PC-9 (cell line): ENCODE measurements at regions of chr3 and their contacts with region 1.

Region 1: DNA sequence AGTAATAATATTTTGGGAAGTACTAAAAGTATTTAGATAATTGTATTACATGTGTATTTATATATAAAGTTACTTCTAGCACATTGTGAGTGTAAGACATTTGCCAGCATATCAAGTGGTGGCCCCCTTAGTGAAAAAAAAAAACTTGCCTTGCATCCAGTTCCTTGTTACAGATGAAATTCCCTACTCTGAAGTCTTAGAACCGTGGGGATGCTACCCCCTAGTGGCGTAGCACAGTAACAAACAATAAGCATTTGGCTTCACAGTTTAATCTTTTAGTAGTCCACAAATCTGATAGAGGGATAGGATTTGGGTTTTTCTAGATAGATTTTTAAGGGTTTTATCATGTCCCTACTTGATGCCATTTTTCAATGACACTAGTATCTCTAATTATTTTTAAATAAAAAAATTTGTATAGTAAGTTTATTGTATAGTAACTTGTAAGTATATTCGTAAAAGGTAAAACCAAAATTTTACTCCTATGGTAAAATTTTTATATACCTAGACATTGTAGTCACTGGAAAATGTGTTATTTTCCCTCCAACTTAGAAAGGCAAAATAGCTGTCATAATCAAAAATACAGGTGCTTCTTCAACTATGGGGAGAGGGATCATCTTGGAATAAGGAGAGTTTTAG is 14.3 kb downstream of the SMC4 start:
- DNase-seq: peak; percentile 61 to 67
- H3K4me3 ChIP-seq: no peak overlapping the region
- H3K27ac ChIP-seq: no peak overlapping the region
- H3K4me1 ChIP-seq: no peaks in the 10 kb centered on the region
- H3K27me3 ChIP-seq: no peaks in the 10 kb centered on the region
- CTCF ChIP-seq: peak; percentile 94

Region 2: DNA sequence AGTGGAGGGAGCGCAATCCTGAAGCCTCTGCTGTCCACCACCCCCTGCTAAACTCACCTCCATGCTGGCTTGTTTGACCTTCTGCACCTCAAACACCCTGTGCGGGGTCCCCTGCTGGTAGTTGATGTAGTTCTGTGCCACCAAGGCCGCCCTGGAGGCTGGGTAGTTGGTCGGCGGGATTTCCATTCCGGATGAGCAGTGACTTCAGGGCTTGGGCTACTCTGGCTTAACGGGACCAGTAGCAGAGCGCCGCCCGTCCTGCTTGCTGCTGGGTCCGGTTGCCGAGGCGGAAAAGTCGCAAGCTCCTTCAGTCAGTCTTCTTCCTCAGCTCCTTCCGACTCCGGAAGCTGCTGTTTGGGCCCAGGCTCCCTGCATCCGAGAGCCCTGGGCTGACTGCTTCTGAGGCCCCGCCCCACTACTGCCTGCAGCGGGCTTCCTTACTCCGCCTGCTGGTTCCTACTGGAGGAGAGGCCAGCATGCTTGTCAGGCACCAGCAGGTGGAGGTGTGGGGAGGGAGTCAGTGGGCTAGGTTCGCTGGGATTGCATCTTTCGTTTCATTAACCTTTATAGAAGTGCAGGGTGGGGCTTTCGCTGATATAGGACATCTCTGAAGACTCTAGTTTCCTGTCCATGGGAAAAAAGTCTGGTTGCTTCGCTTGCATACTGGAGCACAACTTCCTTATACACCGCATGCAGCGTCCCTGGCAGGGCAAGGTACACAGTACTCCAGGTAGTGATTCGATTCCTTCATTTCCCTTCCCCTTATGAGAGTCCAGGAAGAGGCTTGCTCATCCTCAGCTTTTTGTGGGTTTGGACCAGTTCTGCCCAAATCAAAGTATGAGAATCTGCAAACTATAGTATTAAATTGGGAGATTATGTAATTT is 1741.2 kb before region 1 on chr3 and contains the start of gene LXN:
- CTCF ChIA-PET with region 1: no interaction called
- POLR2A ChIA-PET with region 1: interaction called, 10 read pairs
- intact Hi-C with region 1: no loop called
- DNase-seq: no peak
- H3K4me3 ChIP-seq: no peak within 1 kb of the TSS
- H3K27ac ChIP-seq: no peak within 1 kb of the TSS
- H3K4me1 ChIP-seq: no peaks in the 10 kb centered on the region
- H3K27me3 ChIP-seq: no peaks in the 10 kb centered on the region
- CTCF ChIP-seq: no peak
- total RNA-seq, gene LXN: not detected in 2 replicates

Region 3: DNA sequence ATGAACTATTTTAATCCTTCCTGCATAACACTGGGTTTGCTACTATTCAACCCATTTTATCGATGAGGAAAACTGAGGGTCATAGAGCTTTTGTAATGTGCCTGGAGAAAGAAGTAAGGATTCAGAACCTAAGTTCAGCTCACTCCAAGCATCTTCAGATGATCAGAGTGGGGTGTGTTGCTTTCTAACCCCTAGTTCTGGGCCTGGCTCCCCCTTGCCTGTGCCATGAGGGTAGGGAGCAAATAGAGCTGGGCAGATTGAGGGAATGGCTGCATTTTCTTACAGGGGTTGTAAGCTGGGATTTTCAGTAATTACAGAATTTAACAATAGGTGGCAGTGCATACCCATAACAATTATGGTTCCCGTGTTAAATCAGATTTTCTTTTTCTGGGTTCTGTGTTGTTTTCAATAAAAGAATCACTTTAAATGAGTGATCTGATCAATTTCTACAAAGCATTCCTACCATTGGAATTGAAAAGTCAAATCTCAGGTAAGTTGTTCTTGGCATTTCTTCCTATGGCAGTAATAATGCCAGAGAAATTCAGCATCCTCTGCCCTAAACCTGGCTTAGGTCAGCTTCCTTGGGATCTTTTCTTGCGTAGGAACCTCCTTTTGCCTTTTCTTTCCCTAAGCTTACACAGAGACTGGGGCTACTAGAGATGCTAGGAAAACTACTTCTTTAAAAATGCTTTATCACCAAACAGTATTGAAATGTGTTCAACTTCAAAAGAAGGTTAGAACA is 528.9 kb before region 1 on chr3:
- CTCF ChIA-PET with region 1: no interaction called
- POLR2A ChIA-PET with region 1: no interaction called
- intact Hi-C with region 1: loop called (anchors 5 kb)
- DNase-seq: peak; percentile 15 to 45
- H3K4me3 ChIP-seq: no peak overlapping the region
- H3K27ac ChIP-seq: no peak overlapping the region
- H3K4me1 ChIP-seq: no peaks in the 10 kb centered on the region
- H3K27me3 ChIP-seq: no peaks in the 10 kb centered on the region
- CTCF ChIP-seq: peak; percentile 85

Region 4: GRCh38 chr3:160027541-160028195 is 386.1 kb before region 1 on chr3:
- CTCF ChIA-PET with region 1: no interaction called
- POLR2A ChIA-PET with region 1: interaction called, 34 read pairs
- intact Hi-C with region 1: loop called (anchors 1 kb)
- DNase-seq: peak; percentile 33 to 56
- H3K4me3 ChIP-seq: no peak overlapping the region
- H3K27ac ChIP-seq: peak overlapping the region; percentile 63
- H3K4me1 ChIP-seq: peaks cover 12% of the 10 kb centered on the region
- H3K27me3 ChIP-seq: no peaks in the 10 kb centered on the region
- CTCF ChIP-seq: no peak

Region 5: DNA sequence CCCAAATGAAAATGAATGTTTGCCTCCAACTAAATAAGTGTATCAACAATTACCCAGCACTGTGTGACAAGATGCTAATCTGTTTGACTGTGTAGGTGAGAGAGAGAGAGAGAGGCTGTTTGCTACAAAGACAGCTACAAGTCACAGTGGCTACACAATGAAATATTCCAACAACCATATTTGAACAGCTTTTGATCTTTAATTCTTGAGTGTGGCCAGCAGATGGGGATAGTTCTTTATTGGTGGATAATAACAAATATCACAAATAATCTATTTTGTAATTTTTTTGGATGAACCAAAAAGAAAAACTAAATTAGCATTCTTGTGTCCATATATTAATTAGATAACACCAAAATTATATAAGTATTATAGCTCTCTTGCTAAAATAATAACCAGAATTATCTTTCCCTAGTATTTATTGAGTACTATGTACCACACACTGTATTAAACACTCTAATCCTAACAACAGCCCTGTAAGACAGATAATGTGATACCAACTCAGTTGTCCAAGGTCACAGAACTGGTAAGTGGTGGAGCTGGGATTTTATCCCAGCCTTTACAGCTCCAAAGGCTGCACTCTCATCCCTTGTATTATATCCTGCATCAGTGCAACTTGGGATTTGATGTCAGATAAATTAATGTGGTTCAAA is 250.4 kb before region 1 on chr3:
- CTCF ChIA-PET with region 1: no interaction called
- POLR2A ChIA-PET with region 1: no interaction called
- intact Hi-C with region 1: loop called (anchors 2 kb)
- DNase-seq: no peak
- H3K4me3 ChIP-seq: no peak overlapping the region
- H3K27ac ChIP-seq: no peak overlapping the region
- H3K4me1 ChIP-seq: no peaks in the 10 kb centered on the region
- H3K27me3 ChIP-seq: no peaks in the 10 kb centered on the region
- CTCF ChIP-seq: peak; percentile 72

Region 6: GRCh38 chr3:160427832-160428424 is 14.2 kb after region 1 on chr3:
- CTCF ChIA-PET with region 1: interaction called, 9 read pairs
- POLR2A ChIA-PET with region 1: interaction called, 3 read pairs
- intact Hi-C with region 1: loop called (anchors 2 kb)
- DNase-seq: no peak
- H3K4me3 ChIP-seq: no peak overlapping the region
- H3K27ac ChIP-seq: no peak overlapping the region
- H3K4me1 ChIP-seq: no peaks in the 10 kb centered on the region
- H3K27me3 ChIP-seq: no peaks in the 10 kb centered on the region
- CTCF ChIP-seq: no peak

Region 7: DNA sequence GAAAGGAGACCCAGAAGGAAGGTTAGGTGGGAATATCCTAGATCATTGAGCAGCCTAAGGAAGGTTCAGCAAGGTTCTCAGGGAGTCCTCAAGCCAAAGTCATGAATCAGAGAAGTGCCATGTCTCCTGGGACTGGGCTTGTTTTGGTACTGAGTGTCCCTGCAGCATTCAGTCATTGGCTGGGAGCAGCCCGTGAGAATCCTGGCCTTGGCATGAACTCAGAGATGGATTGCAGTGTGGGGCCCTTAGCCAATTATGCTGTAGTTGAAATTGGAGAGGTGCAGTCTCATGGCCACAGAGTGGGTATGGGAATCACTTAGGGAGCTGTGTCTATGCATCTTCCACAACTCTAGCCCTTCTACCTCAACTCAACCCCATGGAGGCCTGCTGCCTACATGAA is 325.3 kb after region 1 on chr3:
- CTCF ChIA-PET with region 1: no interaction called
- POLR2A ChIA-PET with region 1: no interaction called
- intact Hi-C with region 1: no loop called
- DNase-seq: no peak
- H3K4me3 ChIP-seq: no peak overlapping the region
- H3K27ac ChIP-seq: no peak overlapping the region
- H3K4me1 ChIP-seq: no peaks in the 10 kb centered on the region
- H3K27me3 ChIP-seq: no peaks in the 10 kb centered on the region
- CTCF ChIP-seq: no peak